ENCODE measurements at regions of chr5 and their contacts with region 1.

Region 1: GRCh38 chr5:923281-923873 is 30.7 kb downstream of the TRIP13 start:
- DNase-seq: peak; percentile 60 to 91
- H3K4me3 ChIP-seq: no peak overlapping the region
- H3K27ac ChIP-seq: no peak overlapping the region
- H3K4me1 ChIP-seq: peaks cover 0 to 4% (median 3%) of the 10 kb centered on the region in 4 experiments; a peak in 3 of 7 replicates
- H3K27me3 ChIP-seq: peaks cover 3 to 20% (median 16%) of the 10 kb centered on the region in 4 experiments
- CTCF ChIP-seq: peak; percentile 94 to 98 (median 96)
- EP300 ChIP-seq: no peak
- POLR2A ChIP-seq: no peak
- RAD21 ChIP-seq: peak; percentile 97

Region 2: DNA sequence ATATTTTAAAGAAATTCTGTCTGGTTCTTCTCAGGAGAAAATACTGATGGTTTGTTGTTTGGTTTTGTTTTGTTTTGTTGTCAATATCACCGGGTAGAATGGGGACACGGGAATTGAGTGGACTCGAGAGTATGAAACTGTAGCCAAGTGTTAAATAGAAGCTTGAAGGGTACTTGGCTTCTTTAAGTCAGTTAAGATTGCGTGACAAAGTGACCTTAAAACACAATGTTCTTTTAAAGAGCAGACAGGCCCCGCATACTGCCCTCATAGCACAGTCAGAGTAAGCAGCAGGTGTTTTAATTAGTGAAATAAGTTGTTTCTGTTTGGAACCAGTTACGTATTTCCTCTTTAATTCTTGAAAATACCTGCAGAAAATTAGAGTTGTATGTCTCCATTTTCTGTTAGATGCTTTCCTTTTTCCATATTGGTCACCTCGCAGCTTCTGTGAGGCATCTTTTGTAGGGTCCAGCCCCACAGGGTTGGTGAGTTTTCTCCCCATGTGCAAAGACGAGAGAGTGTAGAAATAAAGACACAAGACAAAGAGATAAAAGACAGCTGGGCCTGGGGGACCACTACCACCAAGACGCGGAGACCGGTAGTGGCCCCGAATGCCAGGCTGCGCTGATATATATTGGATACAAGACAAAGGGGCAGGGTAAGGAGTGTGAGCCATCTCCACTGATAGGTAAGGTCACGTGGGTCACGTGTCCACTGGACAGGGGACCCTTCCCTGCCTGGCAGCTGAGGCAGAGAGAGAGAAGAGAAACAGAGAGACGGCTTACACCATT is 21.1 kb before region 1 on chr5:
- CTCF ChIA-PET with region 1: interaction called, 19 read pairs
- POLR2A ChIA-PET with region 1: no interaction called
- DNase-seq: no peak
- H3K4me3 ChIP-seq: no peak overlapping the region
- H3K27ac ChIP-seq: no peak overlapping the region
- H3K4me1 ChIP-seq: no peaks in the 10 kb centered on the region
- H3K27me3 ChIP-seq: no peaks in the 10 kb centered on the region
- CTCF ChIP-seq: no peak
- EP300 ChIP-seq: no peak
- POLR2A ChIP-seq: no peak
- RAD21 ChIP-seq: no peak

Region 3: GRCh38 chr5:912280-913091 is 10.9 kb before region 1 on chr5:
- CTCF ChIA-PET with region 1: interaction called, 13 read pairs
- POLR2A ChIA-PET with region 1: no interaction called
- DNase-seq: no peak
- H3K4me3 ChIP-seq: no peak overlapping the region
- H3K27ac ChIP-seq: peak overlapping the region; percentile 63
- H3K4me1 ChIP-seq: no peaks in the 10 kb centered on the region
- H3K27me3 ChIP-seq: no peaks in the 10 kb centered on the region
- CTCF ChIP-seq: no peak; a peak in 1 of 4 replicates
- EP300 ChIP-seq: no peak
- POLR2A ChIP-seq: no peak
- RAD21 ChIP-seq: no peak

Region 4: DNA sequence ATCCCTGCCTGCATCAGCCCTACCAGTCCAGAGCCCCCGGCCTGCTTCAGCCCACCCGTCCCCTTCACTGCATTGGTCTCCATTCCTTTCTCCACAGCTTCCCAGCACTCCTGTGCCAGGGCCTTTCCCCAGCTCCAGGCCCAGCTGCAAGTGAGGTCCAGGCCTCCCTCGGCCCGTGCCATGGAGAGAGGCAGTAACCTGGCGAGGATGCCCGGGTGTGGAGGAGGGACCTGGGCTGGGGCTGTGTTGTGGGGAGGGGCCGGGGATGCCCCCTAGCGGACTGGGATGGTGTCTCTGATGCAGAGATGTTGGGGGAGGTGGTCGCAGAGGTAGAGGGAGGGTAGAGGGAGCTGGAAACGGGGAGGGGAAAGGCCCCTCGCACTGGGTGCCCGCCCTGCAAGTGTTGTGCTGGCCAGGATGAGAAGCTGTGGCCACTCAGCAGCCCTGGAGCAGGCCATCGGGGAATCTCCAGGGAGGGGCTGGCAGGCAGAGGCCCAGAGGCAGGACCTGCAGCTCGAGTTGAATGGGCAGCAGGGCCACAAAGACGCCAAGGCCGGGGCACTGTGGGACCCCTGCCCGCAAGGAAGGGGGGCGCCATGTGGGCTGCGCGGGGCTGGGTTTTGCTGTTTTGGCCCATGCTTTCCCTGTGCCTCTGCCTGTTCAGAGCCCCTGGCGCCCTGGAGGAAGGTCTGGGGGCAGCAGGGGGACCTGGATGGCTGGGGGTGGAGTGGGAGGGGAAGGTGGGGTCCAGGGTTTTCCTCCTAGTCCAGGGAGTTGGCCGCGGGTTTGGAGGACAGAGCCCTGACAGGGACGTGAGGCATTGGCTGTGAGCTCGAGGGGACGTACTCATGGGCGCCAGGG is 59.2 kb after region 1 on chr5:
- CTCF ChIA-PET with region 1: interaction called, 36 read pairs
- POLR2A ChIA-PET with region 1: no interaction called
- DNase-seq: peak; percentile 38 to 88
- H3K4me3 ChIP-seq: no peak overlapping the region
- H3K27ac ChIP-seq: no peak overlapping the region
- H3K4me1 ChIP-seq: peaks cover 0 to 4% (median under 1%) of the 10 kb centered on the region in 4 experiments; a peak in 4 of 7 replicates
- H3K27me3 ChIP-seq: no peaks in the 10 kb centered on the region
- CTCF ChIP-seq: peak; percentile 76 to 88 (median 78)
- EP300 ChIP-seq: no peak
- POLR2A ChIP-seq: no peak
- RAD21 ChIP-seq: peak; percentile 43 to 68

Region 5: DNA sequence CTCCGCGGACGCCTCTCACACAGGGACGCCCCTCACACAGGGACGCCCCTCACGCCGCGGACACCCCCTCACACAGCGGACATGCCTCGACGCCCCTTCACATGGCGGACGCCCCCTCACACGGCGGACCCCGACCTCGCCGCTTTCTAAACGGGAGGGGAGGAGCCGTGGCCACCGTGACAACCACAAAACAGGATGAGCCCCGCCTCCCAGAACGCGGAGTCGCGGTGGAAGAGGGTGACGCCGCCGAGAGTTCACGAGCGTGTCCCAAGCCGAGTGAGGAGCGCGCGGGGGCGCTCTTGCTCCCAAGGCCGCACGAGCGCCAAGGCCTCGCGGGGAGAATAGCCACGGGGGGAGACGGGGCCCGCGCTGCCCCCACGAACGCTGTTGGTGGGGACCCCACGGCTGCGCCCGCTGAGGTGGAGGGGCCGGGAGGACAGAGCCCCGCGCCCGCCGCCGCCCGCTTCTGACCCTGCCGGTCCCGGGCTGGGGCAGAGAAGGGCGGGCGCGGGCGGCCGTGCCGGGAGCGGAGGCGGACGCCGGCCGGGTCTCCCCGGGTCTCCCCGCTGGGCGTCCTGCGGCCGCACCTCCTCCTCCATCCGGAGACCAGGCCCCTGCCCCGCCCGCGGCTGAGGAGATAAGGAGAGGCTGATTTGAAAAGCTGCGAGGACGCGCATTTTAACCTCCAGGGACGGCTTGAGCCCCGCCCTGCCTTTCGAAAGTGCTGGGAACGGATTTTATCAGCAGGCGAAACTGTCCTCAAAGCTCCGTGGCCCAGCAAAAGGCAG is 81.3 kb after region 1 on chr5:
- CTCF ChIA-PET with region 1: interaction called, 64 read pairs
- POLR2A ChIA-PET with region 1: no interaction called
- DNase-seq: peak in 1 of 2 experiments; percentile 73
- H3K4me3 ChIP-seq: peak overlapping the region; percentile 26 to 69 (median 36)
- H3K27ac ChIP-seq: no peak overlapping the region
- H3K4me1 ChIP-seq: peaks cover 0 to 13% (median 3%) of the 10 kb centered on the region in 4 experiments; a peak in 4 of 7 replicates
- H3K27me3 ChIP-seq: peaks cover 18 to 56% (median 52%) of the 10 kb centered on the region in 4 experiments
- CTCF ChIP-seq: no peak; a peak in 1 of 4 replicates
- EP300 ChIP-seq: no peak
- POLR2A ChIP-seq: no peak
- RAD21 ChIP-seq: no peak

Region 6: GRCh38 chr5:1011226-1011631 is 87.9 kb after region 1 on chr5:
- CTCF ChIA-PET with region 1: interaction called, 64 read pairs
- POLR2A ChIA-PET with region 1: interaction called, 4 read pairs
- DNase-seq: peak in 1 of 2 experiments; percentile 90
- H3K4me3 ChIP-seq: no peak overlapping the region
- H3K27ac ChIP-seq: no peak overlapping the region
- H3K4me1 ChIP-seq: peaks cover 3 to 15% (median 6%) of the 10 kb centered on the region in 4 experiments; a peak in 6 of 7 replicates
- H3K27me3 ChIP-seq: peaks cover 14 to 34% (median 30%) of the 10 kb centered on the region in 4 experiments
- CTCF ChIP-seq: peak in 2 of 3 experiments; percentile 81 to 96; a peak in 3 of 4 replicates
- EP300 ChIP-seq: no peak
- POLR2A ChIP-seq: no peak
- RAD21 ChIP-seq: peak; percentile 57 to 58